Activated naive CD4-positive, alpha-beta T cell treated with anti-CD3 and anti-CD28 coated beads for 36 hours (primary cell): ENCODE measurements at regions of chr1 and their contacts with region 1.

Region 1: DNA sequence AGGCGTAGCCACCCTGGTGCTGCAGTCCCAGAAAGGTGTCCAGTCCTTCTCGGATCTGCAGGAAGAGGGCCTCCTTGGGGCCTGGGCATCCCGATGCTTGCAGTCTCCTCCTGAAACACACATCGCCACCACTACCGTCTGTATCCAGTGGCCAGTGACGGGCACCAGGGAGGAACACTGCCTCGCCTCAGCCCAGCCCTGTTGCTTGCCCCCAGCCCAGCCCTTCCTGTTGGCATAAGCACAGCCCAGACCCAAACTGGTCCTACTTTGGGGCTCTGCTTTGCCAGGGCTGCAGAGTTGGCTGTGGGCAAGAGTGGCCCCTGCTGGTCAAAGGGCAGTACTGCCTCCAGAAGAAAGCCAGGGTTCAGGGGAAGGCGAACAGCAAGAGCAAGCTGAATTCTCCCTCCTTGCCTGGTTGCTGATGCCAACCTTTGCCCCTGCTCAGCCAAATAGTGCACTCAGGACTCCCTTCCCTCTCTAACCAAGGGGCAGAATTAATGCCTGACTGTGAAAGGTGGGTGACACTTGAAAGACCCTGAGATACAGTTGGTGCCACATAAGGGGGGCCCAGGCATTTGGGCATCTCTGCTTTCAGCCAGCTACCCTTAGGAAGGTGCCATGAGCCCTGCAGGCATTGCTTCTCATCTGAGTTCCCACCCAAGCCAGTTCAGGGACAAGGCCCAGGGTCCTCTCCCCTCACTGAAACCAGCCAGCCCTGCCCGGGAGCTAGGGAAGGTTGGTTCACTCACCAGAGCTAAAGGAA is 11.1 kb upstream of the ARHGEF2 start:
- DNase-seq: peak; percentile 87
- H3K4me3 Mint-ChIP-seq: no peak overlapping the region
- H3K27ac Mint-ChIP-seq: no peak overlapping the region
- H3K4me1 Mint-ChIP-seq: peaks cover 4% of the 10 kb centered on the region
- H3K27me3 Mint-ChIP-seq: no peaks in the 10 kb centered on the region

Region 2: GRCh38 chr1:155636397-155637153 is 352.8 kb before region 1 on chr1:
- CTCF ChIA-PET with region 1: no interaction called
- intact Hi-C with region 1: loop called (anchors 10 kb)
- DNase-seq: no peak
- H3K4me3 Mint-ChIP-seq: peak overlapping the region; percentile 94
- H3K27ac Mint-ChIP-seq: peak overlapping the region; percentile 89
- H3K4me1 Mint-ChIP-seq: peaks cover 20% of the 10 kb centered on the region
- H3K27me3 Mint-ChIP-seq: no peaks in the 10 kb centered on the region

Region 3: DNA sequence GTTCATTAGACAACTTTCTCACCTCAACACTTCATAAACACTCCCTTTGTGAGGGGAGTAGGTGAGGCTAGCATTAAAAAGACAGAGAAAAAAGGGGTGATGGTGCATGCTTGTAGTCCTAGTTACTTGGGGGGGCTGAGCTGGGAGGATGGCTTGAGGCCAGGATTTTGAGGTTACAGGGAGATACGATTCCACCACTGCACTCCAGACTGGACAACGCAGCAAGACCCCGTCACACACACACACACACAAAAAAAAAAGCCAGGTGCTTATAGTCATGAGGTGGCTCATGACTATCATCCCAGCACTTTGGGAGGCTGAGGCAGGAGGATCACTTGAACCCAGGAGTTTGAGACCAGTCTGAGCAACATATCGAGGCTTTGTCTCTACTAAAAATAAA is 162.0 kb before region 1 on chr1:
- CTCF ChIA-PET with region 1: no interaction called
- intact Hi-C with region 1: no loop called
- DNase-seq: no peak
- H3K4me3 Mint-ChIP-seq: no peak overlapping the region
- H3K27ac Mint-ChIP-seq: no peak overlapping the region
- H3K4me1 Mint-ChIP-seq: no peaks in the 10 kb centered on the region
- H3K27me3 Mint-ChIP-seq: no peaks in the 10 kb centered on the region

Region 4: GRCh38 chr1:155946633-155947219 is 42.7 kb before region 1 on chr1:
- CTCF ChIA-PET with region 1: interaction called, 16 read pairs
- intact Hi-C with region 1: no loop called
- DNase-seq: no peak
- H3K4me3 Mint-ChIP-seq: no peak overlapping the region
- H3K27ac Mint-ChIP-seq: peak overlapping the region; percentile 99
- H3K4me1 Mint-ChIP-seq: peaks cover 56% of the 10 kb centered on the region
- H3K27me3 Mint-ChIP-seq: no peaks in the 10 kb centered on the region

Region 5: GRCh38 chr1:156012051-156012817 is 22.8 kb after region 1 on chr1:
- CTCF ChIA-PET with region 1: no interaction called
- intact Hi-C with region 1: no loop called
- DNase-seq: no peak
- H3K4me3 Mint-ChIP-seq: no peak overlapping the region
- H3K27ac Mint-ChIP-seq: no peak overlapping the region
- H3K4me1 Mint-ChIP-seq: no peaks in the 10 kb centered on the region
- H3K27me3 Mint-ChIP-seq: no peaks in the 10 kb centered on the region